Heart left ventricle (tissue), 16 donors: ENCODE measurements at regions of chr11 and their contacts with region 1.

Region 1: GRCh38 chr11:119481021-119481666 is 58.2 kb upstream of the THY1 start:
- DNase-seq: peak; percentile 70 to 87 (median 79)
- ATAC-seq: peak; percentile 64 to 93 (median 82)
- H3K4me3 ChIP-seq: no peak overlapping the region
- H3K27ac ChIP-seq: no peak overlapping the region
- H3K4me1 ChIP-seq: peaks cover 0 to 9% (median 2%) of the 10 kb centered on the region in 12 donors
- H3K27me3 ChIP-seq: peaks cover 0 to 6% (median 0%) of the 10 kb centered on the region in 9 donors
- CTCF ChIP-seq: peak; percentile 91 to 99 (median 96)
- POLR2A ChIP-seq: no peak

Region 2: DNA sequence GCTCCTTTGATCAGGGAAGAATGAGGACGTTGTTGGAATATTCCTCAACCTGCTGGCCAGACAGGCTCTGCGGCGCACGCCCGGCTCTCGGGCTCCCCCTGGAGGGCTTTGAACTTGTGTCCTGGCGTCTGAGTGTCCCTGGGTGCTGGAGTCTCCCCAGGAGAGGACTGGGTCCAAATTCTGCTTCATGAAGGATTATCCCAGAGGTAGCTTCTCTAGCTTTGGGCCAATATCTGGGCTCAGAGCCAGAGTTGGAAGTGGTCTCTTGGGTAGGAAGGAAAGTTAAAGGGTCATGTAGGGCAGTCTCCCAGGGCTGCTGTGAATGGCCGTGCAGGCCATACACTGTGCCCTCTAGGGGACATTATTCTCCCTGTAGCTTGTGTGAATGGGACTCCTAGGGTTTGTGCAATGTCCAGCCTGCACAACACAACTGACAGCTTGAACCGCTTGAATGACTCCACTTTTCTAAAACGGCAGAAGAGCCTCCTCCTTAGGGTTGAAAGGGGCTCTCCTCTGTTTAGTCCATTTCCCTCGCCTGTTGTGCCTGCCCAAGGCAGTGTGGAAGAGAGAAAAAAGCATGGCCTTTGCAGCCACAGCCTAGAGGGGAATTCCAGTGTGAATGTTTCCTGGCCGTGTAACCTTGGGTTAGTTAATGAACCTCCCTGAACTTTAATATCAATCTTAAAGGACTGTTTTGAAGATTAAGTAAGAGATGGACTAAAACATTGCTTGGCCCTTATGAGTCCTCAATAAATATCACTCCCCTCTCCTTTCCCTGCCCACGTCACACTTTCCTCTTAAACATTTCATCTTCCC is 53.0 kb after region 1 on chr11:
- intact Hi-C with region 1: loop called in 2 of 10 experiments (anchors 5 kb)
- DNase-seq: peak; percentile 49 to 85 (median 64)
- ATAC-seq: peak in 3 of 4 donors; percentile 75 to 91 (median 82)
- H3K4me3 ChIP-seq: no peak overlapping the region
- H3K27ac ChIP-seq: no peak overlapping the region
- H3K4me1 ChIP-seq: peaks cover 0 to 15% (median 0%) of the 10 kb centered on the region in 12 donors
- H3K27me3 ChIP-seq: peaks cover 0 to 28% (median 0%) of the 10 kb centered on the region in 9 donors
- CTCF ChIP-seq: peak; percentile 67 to 92 (median 84)
- POLR2A ChIP-seq: no peak

Region 3: DNA sequence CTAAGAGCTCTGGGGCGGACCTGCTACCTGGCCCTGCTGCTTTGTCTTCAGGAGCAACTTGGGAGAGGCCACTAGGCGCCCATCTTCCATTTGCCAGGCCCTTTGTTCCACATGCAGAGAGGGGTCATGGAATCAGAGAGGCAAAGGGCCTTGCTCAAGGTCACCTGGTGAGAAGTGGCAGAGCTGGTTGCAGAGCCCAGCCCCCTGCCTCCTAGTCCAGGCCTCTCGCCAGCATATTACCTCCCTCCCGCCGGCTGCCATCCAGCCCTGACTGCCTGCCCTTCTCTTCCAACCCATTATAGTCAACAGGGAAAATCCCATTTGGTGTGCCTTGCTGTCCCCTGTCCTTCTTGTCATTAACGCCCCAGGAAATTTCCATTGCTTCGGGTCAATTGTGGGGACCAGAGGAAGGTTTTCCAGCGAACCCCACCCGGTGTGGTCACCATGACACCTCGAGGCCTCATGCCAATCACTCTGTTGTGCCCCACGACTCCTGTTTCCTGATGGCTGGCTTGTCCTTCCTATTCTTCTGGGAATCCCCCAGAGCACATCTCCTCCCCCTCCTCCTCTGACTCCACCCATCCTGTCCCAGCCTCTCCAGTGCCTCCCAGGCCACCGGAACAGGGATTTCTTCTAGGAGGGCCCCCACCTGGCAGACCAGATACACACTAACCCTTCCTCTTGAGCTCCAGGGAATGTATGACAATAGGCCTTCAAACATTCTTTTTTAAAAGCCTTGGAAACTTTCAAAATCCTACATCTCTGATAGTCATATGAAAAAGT is 170.8 kb after region 1 on chr11:
- intact Hi-C with region 1: loop called in 1 of 10 experiments (anchors 10 kb)
- DNase-seq: peak in 1 of 5 donors; percentile 22
- ATAC-seq: peak in 3 of 4 donors; percentile 47 to 74 (median 59)
- H3K4me3 ChIP-seq: no peak overlapping the region
- H3K27ac ChIP-seq: no peak overlapping the region
- H3K4me1 ChIP-seq: peaks cover 0 to 9% (median 0%) of the 10 kb centered on the region in 12 donors
- H3K27me3 ChIP-seq: no peaks in the 10 kb centered on the region
- CTCF ChIP-seq: no peak
- POLR2A ChIP-seq: no peak

Region 4: GRCh38 chr11:119666463-119667131 is 185.5 kb after region 1 on chr11:
- intact Hi-C with region 1: loop called in 6 of 10 experiments (anchors 5 to 10 kb)
- DNase-seq: peak; percentile 76 to 90 (median 79)
- ATAC-seq: peak; percentile 86 to 94 (median 92)
- H3K4me3 ChIP-seq: no peak overlapping the region
- H3K27ac ChIP-seq: no peak overlapping the region
- H3K4me1 ChIP-seq: peaks cover 0 to 18% (median 11%) of the 10 kb centered on the region in 12 donors
- H3K27me3 ChIP-seq: no peaks in the 10 kb centered on the region
- CTCF ChIP-seq: peak; percentile 93 to 99 (median 96)
- POLR2A ChIP-seq: no peak

Region 5: GRCh38 chr11:119741369-119742262 is 260.5 kb after region 1 on chr11:
- intact Hi-C with region 1: loop called in 3 of 10 experiments (anchors 5 to 10 kb)
- DNase-seq: peak; percentile 49 to 82 (median 52)
- ATAC-seq: peak; percentile 62 to 87 (median 78)
- H3K4me3 ChIP-seq: peak overlapping the region in 9 of 12 donors; percentile 12 to 38 (median 25)
- H3K27ac ChIP-seq: no peak overlapping the region
- H3K4me1 ChIP-seq: peaks cover 0 to 13% (median 0%) of the 10 kb centered on the region in 12 donors
- H3K27me3 ChIP-seq: peaks cover 0 to 25% (median 9%) of the 10 kb centered on the region in 9 donors
- CTCF ChIP-seq: peak; percentile 73 to 88 (median 79)
- POLR2A ChIP-seq: no peak

Region 6: GRCh38 chr11:120108154-120108865 is 627.2 kb after region 1 on chr11:
- intact Hi-C with region 1: loop called (anchors 1 to 5 kb)
- DNase-seq: peak; percentile 46 to 83 (median 63)
- ATAC-seq: peak; percentile 65 to 92 (median 83)
- H3K4me3 ChIP-seq: no peak overlapping the region
- H3K27ac ChIP-seq: no peak overlapping the region
- H3K4me1 ChIP-seq: no peaks in the 10 kb centered on the region
- H3K27me3 ChIP-seq: peaks cover 0 to 14% (median 0%) of the 10 kb centered on the region in 9 donors
- CTCF ChIP-seq: peak; percentile 96 to 100 (median 99)
- POLR2A ChIP-seq: no peak

Region 7: GRCh38 chr11:120172054-120172911 is 691.1 kb after region 1 on chr11:
- intact Hi-C with region 1: loop called in 2 of 10 experiments (anchors 5 kb)
- DNase-seq: peak; percentile 68 to 81 (median 71)
- ATAC-seq: peak; percentile 37 to 75 (median 64)
- H3K4me3 ChIP-seq: no peak overlapping the region
- H3K27ac ChIP-seq: no peak overlapping the region
- H3K4me1 ChIP-seq: peaks cover 0 to 25% (median 8%) of the 10 kb centered on the region in 12 donors
- H3K27me3 ChIP-seq: peaks cover 0 to 60% (median 21%) of the 10 kb centered on the region in 9 donors
- CTCF ChIP-seq: peak; percentile 73 to 93 (median 84)
- POLR2A ChIP-seq: no peak